ENCODE measurements at regions of chr10 and their contacts with region 1.

Region 1: GRCh38 chr10:60237977-60238758 is 151.5 kb downstream of the ANK3 start:
- DNase-seq: peak; percentile 68
- ATAC-seq: peak; percentile 40
- H3K4me3 ChIP-seq: peak overlapping the region in 4 of 5 experiments; percentile 32 to 68 (median 52)
- H3K4me3 Mint-ChIP-seq: peak overlapping the region; percentile 74
- H3K27ac ChIP-seq: peak overlapping the region; percentile 83 to 93
- H3K27ac Mint-ChIP-seq: peak overlapping the region; percentile 92
- H3K4me1 ChIP-seq: peaks cover 56 to 57% of the 10 kb centered on the region in 2 donors
- H3K4me1 Mint-ChIP-seq: peaks cover 56% of the 10 kb centered on the region
- H3K27me3 ChIP-seq: no peaks in the 10 kb centered on the region
- H3K27me3 Mint-ChIP-seq: no peaks in the 10 kb centered on the region
- CTCF ChIP-seq: peak; percentile 49

Region 2: DNA sequence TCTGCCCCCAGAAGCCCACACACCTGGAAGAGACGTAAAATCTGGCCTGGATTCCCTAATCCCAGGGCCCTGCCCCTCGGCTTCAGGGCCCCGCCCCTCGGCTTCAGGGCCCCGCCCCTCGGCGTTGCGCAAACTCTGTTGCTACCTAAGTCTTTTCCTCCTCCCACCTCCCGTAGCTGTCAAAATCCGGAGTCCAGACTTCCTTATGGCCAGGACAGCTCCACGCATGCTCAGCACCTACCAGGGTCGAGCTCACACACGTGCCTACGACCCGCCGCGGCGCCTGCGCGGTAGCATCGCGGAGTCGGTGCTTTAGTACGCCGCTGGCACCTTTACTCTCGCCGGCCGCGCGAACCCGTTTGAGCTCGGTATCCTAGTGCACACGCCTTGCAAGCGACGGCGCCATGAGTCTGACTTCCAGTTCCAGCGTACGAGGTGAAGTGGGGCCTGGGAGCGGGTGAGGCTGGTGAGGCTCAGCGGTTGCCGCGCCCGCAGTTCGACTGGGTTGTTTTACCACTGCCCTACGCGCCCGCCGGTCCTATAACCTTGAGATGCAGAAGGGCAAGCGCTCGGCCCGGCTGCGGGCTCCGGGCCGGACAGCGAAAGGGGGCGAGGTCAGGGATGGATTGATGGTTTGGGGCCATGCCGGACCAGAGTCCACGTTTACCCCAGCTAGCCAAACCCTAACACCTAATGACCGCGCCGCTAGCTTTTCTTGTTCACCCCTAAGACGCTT is 1969.1 kb before region 1 on chr10 and contains the start of gene CISD1:
- CTCF ChIA-PET with region 1: no interaction called
- POLR2A ChIA-PET with region 1: no interaction called
- intact Hi-C with region 1: loop called (anchors 10 kb)
- DNase-seq: peak; percentile 99
- ATAC-seq: peak; percentile 66
- H3K4me3 ChIP-seq: peak within 1 kb of the TSS; percentile 67 to 88 (median 76)
- H3K4me3 Mint-ChIP-seq: peak within 1 kb of the TSS; percentile 97
- H3K27ac ChIP-seq: peak within 1 kb of the TSS; percentile 89 to 98
- H3K27ac Mint-ChIP-seq: peak within 1 kb of the TSS; percentile 96
- H3K4me1 ChIP-seq: peaks cover 25 to 33% of the 10 kb centered on the region in 2 donors
- H3K4me1 Mint-ChIP-seq: peaks cover 36% of the 10 kb centered on the region
- H3K27me3 ChIP-seq: no peaks in the 10 kb centered on the region
- H3K27me3 Mint-ChIP-seq: no peaks in the 10 kb centered on the region
- CTCF ChIP-seq: no peak
- total RNA-seq, gene CISD1: 6.3 and 7.3 TPM in 2 replicates

Region 3: DNA sequence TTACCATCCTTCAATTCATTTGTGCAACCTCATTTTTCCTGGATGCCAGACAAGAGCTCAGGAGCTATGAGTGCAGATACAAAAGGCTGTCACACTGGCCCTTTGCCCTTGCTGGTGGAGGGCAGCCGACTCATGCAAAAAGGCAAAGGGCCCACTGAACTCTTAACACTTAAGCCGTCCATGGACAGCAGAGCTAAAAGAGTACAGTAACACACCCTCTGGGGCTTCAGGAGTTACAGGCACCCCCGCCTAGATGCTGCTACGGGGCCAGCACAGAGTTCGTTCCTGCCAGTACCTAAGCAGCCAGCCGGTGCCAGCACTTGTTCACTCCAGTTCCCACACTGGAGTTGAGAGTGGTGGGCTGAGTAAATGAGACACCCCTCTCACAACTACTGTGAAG is 415.1 kb before region 1 on chr10:
- CTCF ChIA-PET with region 1: no interaction called
- POLR2A ChIA-PET with region 1: no interaction called
- intact Hi-C with region 1: no loop called
- DNase-seq: no peak
- ATAC-seq: no peak
- H3K4me3 ChIP-seq: no peak overlapping the region
- H3K4me3 Mint-ChIP-seq: no peak overlapping the region
- H3K27ac ChIP-seq: no peak overlapping the region
- H3K27ac Mint-ChIP-seq: no peak overlapping the region
- H3K4me1 ChIP-seq: no peaks in the 10 kb centered on the region
- H3K4me1 Mint-ChIP-seq: peaks cover 32% of the 10 kb centered on the region
- H3K27me3 ChIP-seq: no peaks in the 10 kb centered on the region
- H3K27me3 Mint-ChIP-seq: no peaks in the 10 kb centered on the region
- CTCF ChIP-seq: no peak

Region 4: GRCh38 chr10:59906417-59907202 is 331.6 kb before region 1 on chr10 and contains the start of gene CCDC6:
- CTCF ChIA-PET with region 1: interaction called, 8 read pairs
- POLR2A ChIA-PET with region 1: no interaction called
- intact Hi-C with region 1: loop called (anchors 1 kb)
- DNase-seq: peak; percentile 96
- ATAC-seq: peak; percentile 83
- H3K4me3 ChIP-seq: peak within 1 kb of the TSS; percentile 53 to 96 (median 89)
- H3K4me3 Mint-ChIP-seq: peak within 1 kb of the TSS; percentile 98
- H3K27ac ChIP-seq: peak within 1 kb of the TSS; percentile 85 to 95
- H3K27ac Mint-ChIP-seq: peak within 1 kb of the TSS; percentile 96
- H3K4me1 ChIP-seq: peaks cover 40 to 42% of the 10 kb centered on the region in 2 donors
- H3K4me1 Mint-ChIP-seq: peaks cover 56% of the 10 kb centered on the region
- H3K27me3 ChIP-seq: no peaks in the 10 kb centered on the region
- H3K27me3 Mint-ChIP-seq: no peaks in the 10 kb centered on the region
- CTCF ChIP-seq: peak; percentile 82
- total RNA-seq, gene CCDC6: 30.1 and 32.1 TPM in 2 replicates

Region 5: DNA sequence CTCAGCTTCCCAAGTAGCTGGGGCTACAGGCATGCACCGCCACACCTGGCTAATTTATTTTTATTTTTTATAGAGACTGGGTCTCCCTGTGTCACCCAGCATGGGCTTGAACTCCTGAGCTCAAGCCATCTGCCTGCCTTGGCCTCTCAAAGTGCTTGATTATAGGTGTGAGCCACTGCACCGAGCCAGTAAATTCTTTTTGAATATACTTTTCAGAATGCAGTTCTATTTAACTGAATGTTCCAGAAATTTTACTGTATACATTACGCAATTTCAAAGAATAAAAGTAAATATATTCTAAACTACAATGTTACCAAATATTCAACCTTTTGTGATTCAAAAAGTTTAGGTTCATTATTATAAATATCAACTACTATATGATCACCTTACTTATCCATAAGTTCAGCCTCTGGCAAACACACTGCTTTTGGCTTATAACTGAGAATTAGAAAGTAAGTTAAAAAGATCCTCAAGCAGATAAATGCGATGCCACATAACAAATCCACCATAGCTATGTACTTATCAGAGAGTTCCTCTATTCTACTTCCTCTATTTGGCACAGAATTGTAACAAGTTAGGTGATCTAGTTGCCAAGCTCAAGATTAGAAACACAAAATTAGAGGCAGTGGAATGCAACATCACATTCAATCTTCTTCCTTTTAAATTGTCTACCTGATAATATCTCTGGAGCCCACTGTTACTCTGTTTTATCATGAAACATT is 33.3 kb after region 1 on chr10:
- CTCF ChIA-PET with region 1: interaction called, 7 read pairs
- POLR2A ChIA-PET with region 1: no interaction called
- intact Hi-C with region 1: loop called (anchors 5 kb)
- DNase-seq: peak; percentile 56
- ATAC-seq: peak; percentile 87
- H3K4me3 ChIP-seq: no peak overlapping the region
- H3K4me3 Mint-ChIP-seq: peak overlapping the region; percentile 20
- H3K27ac ChIP-seq: peak overlapping the region in 1 of 2 donors; percentile 7
- H3K27ac Mint-ChIP-seq: peak overlapping the region; percentile 71
- H3K4me1 ChIP-seq: peaks cover 8 to 12% of the 10 kb centered on the region in 2 donors
- H3K4me1 Mint-ChIP-seq: peaks cover 11% of the 10 kb centered on the region
- H3K27me3 ChIP-seq: no peaks in the 10 kb centered on the region
- H3K27me3 Mint-ChIP-seq: no peaks in the 10 kb centered on the region
- CTCF ChIP-seq: no peak

Region 6: GRCh38 chr10:60305380-60305892 is 67.3 kb after region 1 on chr10:
- CTCF ChIA-PET with region 1: no interaction called
- POLR2A ChIA-PET with region 1: no interaction called
- intact Hi-C with region 1: no loop called
- DNase-seq: no peak
- ATAC-seq: no peak
- H3K4me3 ChIP-seq: no peak overlapping the region
- H3K4me3 Mint-ChIP-seq: no peak overlapping the region
- H3K27ac ChIP-seq: no peak overlapping the region
- H3K27ac Mint-ChIP-seq: no peak overlapping the region
- H3K4me1 ChIP-seq: no peaks in the 10 kb centered on the region
- H3K4me1 Mint-ChIP-seq: no peaks in the 10 kb centered on the region
- H3K27me3 ChIP-seq: no peaks in the 10 kb centered on the region
- H3K27me3 Mint-ChIP-seq: no peaks in the 10 kb centered on the region
- CTCF ChIP-seq: no peak

Region 7: DNA sequence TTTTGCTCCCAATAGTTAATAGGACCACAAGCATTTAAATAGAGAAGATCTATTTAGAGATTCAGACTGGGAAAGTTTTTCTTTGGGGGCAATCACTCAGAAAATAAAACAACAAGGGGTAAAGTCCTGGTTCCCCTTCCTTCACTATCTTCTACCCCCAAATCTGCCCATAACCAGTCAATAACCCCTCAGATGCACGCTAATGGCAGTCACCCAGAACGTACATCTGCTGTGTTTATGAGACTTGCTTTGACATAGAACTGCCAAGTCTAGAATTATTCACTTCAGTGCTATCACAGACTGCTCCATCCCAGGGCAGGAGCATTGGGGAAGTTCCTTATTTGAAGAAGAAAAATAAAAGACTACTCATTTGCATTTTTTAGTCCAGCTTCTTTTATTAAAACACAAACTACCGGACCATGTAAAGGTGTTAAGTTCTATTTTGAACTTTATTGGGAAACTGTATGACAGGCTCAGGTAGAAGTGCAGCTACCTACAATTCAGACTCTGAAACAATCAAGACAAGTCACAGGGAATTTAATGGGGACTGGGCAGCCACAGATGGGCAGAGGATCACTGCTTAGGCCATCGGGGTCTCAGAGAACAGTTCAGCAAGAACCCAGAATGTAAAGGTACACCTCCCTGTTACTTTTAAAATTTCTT is 113.2 kb after region 1 on chr10:
- CTCF ChIA-PET with region 1: interaction called, 34 read pairs
- POLR2A ChIA-PET with region 1: interaction called, 3 read pairs
- intact Hi-C with region 1: loop called (anchors 1 kb)
- DNase-seq: peak; percentile 82
- ATAC-seq: peak; percentile 94
- H3K4me3 ChIP-seq: peak overlapping the region in 3 of 5 experiments; percentile 8 to 27 (median 19)
- H3K4me3 Mint-ChIP-seq: peak overlapping the region; percentile 77
- H3K27ac ChIP-seq: peak overlapping the region; percentile 83 to 84
- H3K27ac Mint-ChIP-seq: peak overlapping the region; percentile 91
- H3K4me1 ChIP-seq: peaks cover 40 to 41% of the 10 kb centered on the region in 2 donors
- H3K4me1 Mint-ChIP-seq: peaks cover 51% of the 10 kb centered on the region
- H3K27me3 ChIP-seq: no peaks in the 10 kb centered on the region
- H3K27me3 Mint-ChIP-seq: no peaks in the 10 kb centered on the region
- CTCF ChIP-seq: no peak

Region 8: GRCh38 chr10:60399328-60399727 is 161.2 kb after region 1 on chr10:
- CTCF ChIA-PET with region 1: no interaction called
- POLR2A ChIA-PET with region 1: no interaction called
- intact Hi-C with region 1: no loop called
- DNase-seq: no peak
- ATAC-seq: no peak
- H3K4me3 ChIP-seq: no peak overlapping the region
- H3K4me3 Mint-ChIP-seq: no peak overlapping the region
- H3K27ac ChIP-seq: no peak overlapping the region
- H3K27ac Mint-ChIP-seq: no peak overlapping the region
- H3K4me1 ChIP-seq: peaks cover 4% of the 10 kb centered on the region in 2 donors
- H3K4me1 Mint-ChIP-seq: peaks cover 6% of the 10 kb centered on the region
- H3K27me3 ChIP-seq: no peaks in the 10 kb centered on the region
- H3K27me3 Mint-ChIP-seq: no peaks in the 10 kb centered on the region
- CTCF ChIP-seq: no peak

Region 9: DNA sequence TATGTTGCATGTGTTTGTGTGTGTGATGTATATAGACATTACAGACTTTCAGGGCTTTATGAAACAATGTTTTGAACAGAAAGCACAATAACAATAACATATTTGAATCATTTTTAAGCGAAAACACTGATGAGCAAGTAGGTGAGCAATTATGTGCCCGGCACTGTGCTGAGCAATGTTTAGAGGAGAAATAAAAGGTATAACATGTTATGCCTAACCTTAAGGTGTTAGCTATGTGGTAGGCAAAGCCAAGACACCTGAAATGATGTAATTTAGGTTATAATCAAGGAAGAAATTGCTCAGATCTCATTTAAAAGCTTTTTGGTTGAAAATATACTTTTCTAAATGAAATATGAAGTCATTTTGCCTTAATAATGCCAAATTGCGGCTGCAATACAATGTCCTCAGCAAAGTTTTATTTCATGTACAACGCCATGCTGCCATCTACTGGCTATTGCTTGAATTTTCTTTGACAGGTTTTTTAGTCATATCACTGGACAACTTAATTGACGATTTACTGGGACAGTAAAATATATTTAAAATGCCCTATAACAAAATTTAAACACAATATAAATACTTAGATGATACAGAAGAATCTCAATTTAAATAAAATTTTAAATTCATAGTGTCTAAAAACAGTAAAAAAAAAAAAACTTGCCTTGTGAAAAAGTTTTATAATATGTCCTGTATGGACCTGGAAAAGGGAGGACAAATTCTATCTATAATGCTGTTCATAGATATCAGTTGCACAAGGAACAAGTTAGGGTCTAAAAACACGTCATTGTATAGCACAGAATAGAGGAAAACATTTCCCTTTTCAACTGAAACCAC is 409.0 kb after region 1 on chr10:
- CTCF ChIA-PET with region 1: interaction called, 39 read pairs
- POLR2A ChIA-PET with region 1: no interaction called
- intact Hi-C with region 1: loop called (anchors 1 kb)
- DNase-seq: peak; percentile 68
- ATAC-seq: peak; percentile 61
- H3K4me3 ChIP-seq: no peak overlapping the region
- H3K4me3 Mint-ChIP-seq: no peak overlapping the region
- H3K27ac ChIP-seq: no peak overlapping the region
- H3K27ac Mint-ChIP-seq: no peak overlapping the region
- H3K4me1 ChIP-seq: peaks cover 0 to 2% of the 10 kb centered on the region in 2 donors
- H3K4me1 Mint-ChIP-seq: peaks cover 6% of the 10 kb centered on the region
- H3K27me3 ChIP-seq: no peaks in the 10 kb centered on the region
- H3K27me3 Mint-ChIP-seq: no peaks in the 10 kb centered on the region
- CTCF ChIP-seq: peak; percentile 92

Region 10: DNA sequence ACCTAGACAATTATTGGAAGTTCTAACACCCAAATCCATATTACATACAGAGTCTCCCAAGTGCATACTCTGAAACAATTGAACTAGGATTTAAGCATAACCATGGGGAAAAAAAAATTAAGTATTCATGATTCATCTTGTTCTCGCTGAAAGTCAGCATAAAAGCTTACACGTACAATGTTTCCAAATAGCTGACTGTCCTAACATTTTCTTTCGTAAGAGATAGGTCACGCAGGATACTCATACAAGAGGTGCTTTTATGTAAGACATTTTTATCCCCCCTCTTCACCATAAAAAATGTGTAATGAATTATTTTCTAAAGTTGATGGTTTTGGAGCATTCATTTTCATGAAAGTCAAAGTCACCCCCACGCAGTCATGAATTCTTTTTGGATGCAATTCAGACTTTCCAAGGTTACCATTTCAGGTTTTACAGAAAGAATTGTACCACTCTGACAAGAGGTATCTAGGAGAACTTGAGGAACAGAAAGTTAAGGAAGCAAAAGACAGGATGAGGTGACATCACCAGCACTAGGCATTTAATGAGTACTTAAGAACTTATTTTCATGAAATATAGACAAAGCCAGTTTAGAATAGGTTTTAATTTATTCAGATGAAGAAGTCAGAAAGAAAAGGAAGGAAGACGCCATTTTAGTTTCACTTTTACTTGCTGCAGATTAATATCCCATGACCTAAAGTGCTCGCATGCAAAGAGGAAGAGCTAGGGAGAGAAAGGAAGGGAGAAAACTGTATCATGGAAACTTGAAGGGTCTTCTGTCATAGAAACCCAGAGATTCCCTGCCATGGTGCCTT is 1159.2 kb after region 1 on chr10:
- CTCF ChIA-PET with region 1: no interaction called
- POLR2A ChIA-PET with region 1: no interaction called
- intact Hi-C with region 1: loop called (anchors 10 kb)
- DNase-seq: peak; percentile 57
- ATAC-seq: no peak
- H3K4me3 ChIP-seq: peak overlapping the region in 4 of 5 experiments; percentile 23 to 53 (median 31)
- H3K4me3 Mint-ChIP-seq: peak overlapping the region; percentile 58
- H3K27ac ChIP-seq: peak overlapping the region in 1 of 2 donors; percentile 6
- H3K27ac Mint-ChIP-seq: peak overlapping the region; percentile 33
- H3K4me1 ChIP-seq: peaks cover 13 to 16% of the 10 kb centered on the region in 2 donors
- H3K4me1 Mint-ChIP-seq: peaks cover 14% of the 10 kb centered on the region
- H3K27me3 ChIP-seq: no peaks in the 10 kb centered on the region
- H3K27me3 Mint-ChIP-seq: no peaks in the 10 kb centered on the region
- CTCF ChIP-seq: no peak